Sigmoid colon (tissue), 7 donors: ENCODE measurements at regions of chr6 and their contacts with region 1.

Region 1: GRCh38 chr6:130322673-130323268 is 43.0 kb upstream of the TMEM200A start:
- DNase-seq: no peak
- H3K4me3 ChIP-seq: no peak overlapping the region
- H3K27ac ChIP-seq: no peak overlapping the region
- H3K4me1 ChIP-seq: peaks cover 0 to 12% (median 0%) of the 10 kb centered on the region in 4 donors
- H3K27me3 ChIP-seq: no peaks in the 10 kb centered on the region
- CTCF ChIP-seq: peak; percentile 37 to 75 (median 66)
- EP300 ChIP-seq: no peak
- POLR2A ChIP-seq: no peak

Region 2: DNA sequence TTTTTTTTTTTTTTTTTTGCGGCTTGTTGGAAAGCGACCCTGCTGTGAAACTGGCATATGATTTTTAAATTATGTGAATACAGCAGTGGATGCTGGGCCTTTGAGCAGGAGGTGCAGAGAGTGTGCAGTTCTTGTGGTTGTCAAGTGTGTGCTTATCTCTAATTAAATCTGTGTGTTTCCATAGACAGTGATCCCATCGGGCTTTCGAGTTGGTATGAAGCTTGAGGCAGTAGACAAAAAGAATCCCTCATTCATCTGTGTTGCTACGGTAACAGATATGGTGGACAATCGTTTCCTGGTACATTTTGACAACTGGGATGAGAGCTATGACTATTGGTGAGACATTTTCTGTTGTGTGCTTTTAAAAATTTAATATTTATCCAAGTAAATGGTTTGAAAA is 252.0 kb before region 1 on chr6:
- intact Hi-C with region 1: no loop called
- DNase-seq: no peak
- H3K4me3 ChIP-seq: no peak overlapping the region
- H3K27ac ChIP-seq: no peak overlapping the region
- H3K4me1 ChIP-seq: peaks cover 0 to 4% (median 0%) of the 10 kb centered on the region in 4 donors
- H3K27me3 ChIP-seq: no peaks in the 10 kb centered on the region
- CTCF ChIP-seq: no peak
- EP300 ChIP-seq: no peak
- POLR2A ChIP-seq: no peak

Region 3: GRCh38 chr6:130697995-130698535 is 375.3 kb after region 1 on chr6:
- intact Hi-C with region 1: loop called (anchors 2 kb)
- DNase-seq: no peak
- H3K4me3 ChIP-seq: no peak overlapping the region
- H3K27ac ChIP-seq: no peak overlapping the region
- H3K4me1 ChIP-seq: no peaks in the 10 kb centered on the region
- H3K27me3 ChIP-seq: no peaks in the 10 kb centered on the region
- CTCF ChIP-seq: peak in 3 of 4 experiments; percentile 21 to 51 (median 43)
- EP300 ChIP-seq: no peak
- POLR2A ChIP-seq: no peak

Region 4: DNA sequence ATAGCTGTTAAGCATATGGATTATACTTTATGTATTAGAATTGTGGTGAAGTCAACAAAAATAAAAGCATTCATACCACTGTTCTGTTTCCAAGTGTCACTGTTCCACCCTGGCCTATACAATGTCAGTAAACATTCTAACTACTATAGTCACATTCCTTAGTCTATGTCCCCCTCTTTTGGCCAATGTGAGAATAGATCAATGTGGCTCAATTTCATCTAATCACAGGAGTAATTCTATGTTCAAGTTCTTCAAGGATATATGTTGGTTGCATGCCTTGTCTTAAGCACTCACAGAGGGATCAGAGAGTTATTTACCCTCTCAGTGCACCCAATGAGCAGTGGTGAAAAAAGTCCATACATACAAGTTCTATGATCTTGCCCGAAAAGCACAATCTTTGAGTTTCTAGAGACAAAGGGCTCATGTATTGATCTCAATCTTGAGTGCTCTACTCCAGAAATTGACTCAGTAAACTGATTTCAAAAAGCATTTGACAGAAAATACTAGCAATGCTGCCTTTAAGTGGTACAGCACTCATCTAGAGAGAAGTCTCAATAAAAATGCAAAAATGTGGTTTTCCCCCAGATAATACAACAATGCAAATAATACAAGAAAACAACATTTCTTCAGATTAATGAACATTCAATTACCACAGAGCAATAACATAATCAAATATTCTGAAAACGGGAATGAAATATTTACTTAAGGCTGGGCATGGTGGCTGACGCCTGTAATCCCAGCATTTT is 521.0 kb after region 1 on chr6:
- intact Hi-C with region 1: loop called (anchors 2 kb)
- DNase-seq: no peak
- H3K4me3 ChIP-seq: no peak overlapping the region
- H3K27ac ChIP-seq: no peak overlapping the region
- H3K4me1 ChIP-seq: peaks cover 0 to 4% (median 0%) of the 10 kb centered on the region in 4 donors
- H3K27me3 ChIP-seq: no peaks in the 10 kb centered on the region
- CTCF ChIP-seq: peak in 3 of 4 experiments; percentile 30 to 46 (median 40)
- EP300 ChIP-seq: no peak
- POLR2A ChIP-seq: no peak

Region 5: DNA sequence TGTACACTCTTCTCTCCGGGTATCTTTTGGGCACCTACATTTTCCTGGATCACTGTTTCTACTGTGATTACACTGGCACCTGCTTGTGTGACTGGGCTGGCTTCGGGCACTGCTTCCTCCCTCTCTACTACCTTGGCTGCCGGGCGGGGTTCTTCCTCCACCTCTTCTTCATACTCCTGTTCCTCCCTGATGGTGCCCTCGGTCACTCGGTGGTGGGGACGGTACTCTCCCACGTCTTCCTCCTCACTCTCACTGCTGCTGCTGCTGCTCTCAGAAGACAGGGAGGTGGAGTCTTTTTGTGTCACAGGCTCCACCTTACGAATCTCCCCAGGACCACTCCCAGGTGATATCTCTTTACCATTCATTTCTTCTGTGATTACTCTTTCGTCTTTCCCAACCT is 546.9 kb after region 1 on chr6:
- intact Hi-C with region 1: loop called (anchors 2 kb)
- DNase-seq: no peak
- H3K4me3 ChIP-seq: no peak overlapping the region
- H3K27ac ChIP-seq: no peak overlapping the region
- H3K4me1 ChIP-seq: no peaks in the 10 kb centered on the region
- H3K27me3 ChIP-seq: no peaks in the 10 kb centered on the region
- CTCF ChIP-seq: no peak
- EP300 ChIP-seq: no peak
- POLR2A ChIP-seq: no peak

Region 6: DNA sequence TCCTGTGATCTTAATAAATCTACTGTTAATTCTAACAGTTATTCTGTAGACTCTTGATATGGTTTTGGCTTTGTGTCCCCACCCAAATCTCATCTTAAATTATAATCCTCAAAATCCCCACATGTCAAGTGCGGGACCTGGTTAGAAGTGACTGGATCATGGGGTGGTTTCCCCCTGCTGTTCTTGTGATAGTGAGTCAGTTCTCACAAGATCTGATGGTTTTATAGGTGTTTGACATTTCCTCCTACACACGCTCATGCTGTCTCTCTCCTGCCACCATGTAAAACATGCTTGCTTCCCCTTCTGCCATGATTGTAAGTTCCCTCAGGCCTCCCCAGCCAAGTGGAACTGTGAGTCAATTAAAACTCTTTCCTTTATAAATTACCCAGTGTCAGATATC is 750.8 kb after region 1 on chr6:
- intact Hi-C with region 1: no loop called
- DNase-seq: no peak
- H3K4me3 ChIP-seq: no peak overlapping the region
- H3K27ac ChIP-seq: no peak overlapping the region
- H3K4me1 ChIP-seq: no peaks in the 10 kb centered on the region
- H3K27me3 ChIP-seq: no peaks in the 10 kb centered on the region
- CTCF ChIP-seq: no peak
- EP300 ChIP-seq: no peak
- POLR2A ChIP-seq: no peak